HCT116 (cell line): ENCODE measurements at regions of chr6 and their contacts with region 1.

Region 1: GRCh38 chr6:12289933-12290820 is at the start of gene EDN1:
- DNase-seq: peak; percentile 69
- ATAC-seq: peak; percentile 82
- H3K4me3 ChIP-seq: peak within 1 kb of the TSS; percentile 52
- H3K27ac ChIP-seq: peak within 1 kb of the TSS; percentile 4; the same call in 1 of the 2 replicates
- H3K4me1 ChIP-seq: peaks cover 7 to 36% of the 10 kb centered on the region in 2 experiments
- H3K27me3 ChIP-seq: no peaks in the 10 kb centered on the region
- CTCF ChIP-seq: peak; percentile 31 to 49 (median 40); a peak in 4 of 6 replicates
- POLR2A ChIP-seq: no peak
- RAD21 ChIP-seq: peak; percentile 31
- total RNA-seq, gene EDN1: 0.22 TPM

Region 2: DNA sequence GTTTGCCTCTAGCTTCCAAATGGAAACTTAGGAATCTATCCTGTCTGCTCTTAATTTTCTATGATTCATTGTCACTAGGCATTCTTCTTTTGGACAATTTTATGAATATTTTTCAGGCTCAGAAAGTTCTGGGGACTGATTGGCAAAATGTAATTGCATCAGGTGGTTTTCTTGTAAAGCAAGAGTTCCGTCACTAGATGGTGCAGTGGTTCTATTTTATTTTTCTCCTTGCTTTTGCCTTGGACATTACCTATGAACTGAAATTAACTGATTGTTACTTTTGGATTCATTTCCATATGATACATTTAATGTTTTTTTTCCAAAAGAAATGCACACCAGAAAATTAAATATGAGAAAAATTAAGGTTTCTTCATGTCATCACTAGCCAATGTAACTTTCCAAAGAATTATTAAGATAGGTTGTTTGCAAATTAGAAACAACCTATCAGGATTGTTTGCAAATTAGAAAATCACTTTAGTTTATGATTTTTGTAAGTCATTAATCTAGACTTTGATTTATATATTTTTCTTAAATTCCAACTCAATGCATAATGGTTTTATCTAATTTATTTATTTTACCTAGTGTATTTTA is 704.7 kb before region 1 on chr6:
- CTCF ChIA-PET with region 1: interaction called, 9 read pairs
- POLR2A ChIA-PET with region 1: no interaction called
- RAD21 ChIA-PET with region 1: no interaction called
- intact Hi-C with region 1: loop called (anchors 1 kb)
- DNase-seq: peak; percentile 44
- ATAC-seq: peak; percentile 63; the same call in 1 of the 2 replicates
- H3K4me3 ChIP-seq: no peak overlapping the region
- H3K27ac ChIP-seq: no peak overlapping the region
- H3K4me1 ChIP-seq: no peaks in the 10 kb centered on the region
- H3K27me3 ChIP-seq: no peaks in the 10 kb centered on the region
- CTCF ChIP-seq: peak; percentile 48 to 76 (median 71)
- POLR2A ChIP-seq: no peak
- RAD21 ChIP-seq: peak; percentile 75

Region 3: GRCh38 chr6:11653028-11653583 is 637.1 kb before region 1 on chr6:
- CTCF ChIA-PET with region 1: interaction called, 15 read pairs
- POLR2A ChIA-PET with region 1: no interaction called
- RAD21 ChIA-PET with region 1: no interaction called
- intact Hi-C with region 1: loop called (anchors 1 kb)
- DNase-seq: no peak
- ATAC-seq: no peak
- H3K4me3 ChIP-seq: no peak overlapping the region
- H3K27ac ChIP-seq: no peak overlapping the region
- H3K4me1 ChIP-seq: peaks cover 6 to 19% of the 10 kb centered on the region in 2 experiments
- H3K27me3 ChIP-seq: no peaks in the 10 kb centered on the region
- CTCF ChIP-seq: no peak
- POLR2A ChIP-seq: no peak
- RAD21 ChIP-seq: no peak

Region 4: DNA sequence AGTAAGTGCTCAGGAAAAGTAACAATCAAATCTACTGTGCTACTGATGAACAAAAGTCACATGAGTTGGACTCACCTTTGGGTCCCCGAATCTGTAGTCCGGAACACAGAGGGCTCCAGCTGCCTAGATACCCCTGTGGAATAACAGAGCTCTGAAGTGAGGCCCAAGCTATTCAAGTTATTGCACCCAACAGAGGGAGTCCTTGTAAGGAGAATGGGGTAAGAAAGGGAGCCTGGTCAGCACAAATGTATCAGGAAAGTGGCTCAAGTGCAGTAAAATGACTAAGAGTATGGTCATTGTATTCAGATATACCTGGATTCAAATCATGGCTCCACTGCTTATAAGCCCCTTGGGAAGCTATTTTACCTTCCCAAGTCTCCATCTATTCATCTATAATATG is 20.9 kb after region 1 on chr6:
- CTCF ChIA-PET with region 1: interaction called, 10 read pairs
- POLR2A ChIA-PET with region 1: no interaction called
- RAD21 ChIA-PET with region 1: no interaction called
- intact Hi-C with region 1: no loop called
- DNase-seq: no peak
- ATAC-seq: peak; percentile 65
- H3K4me3 ChIP-seq: no peak overlapping the region
- H3K27ac ChIP-seq: no peak overlapping the region
- H3K4me1 ChIP-seq: peaks cover 0 to 26% of the 10 kb centered on the region in 2 experiments; a peak in 2 of 4 replicates
- H3K27me3 ChIP-seq: no peaks in the 10 kb centered on the region
- CTCF ChIP-seq: peak in 2 of 3 experiments; percentile 19 to 43; a peak in 2 of 6 replicates
- POLR2A ChIP-seq: no peak
- RAD21 ChIP-seq: peak; percentile 59

Region 5: DNA sequence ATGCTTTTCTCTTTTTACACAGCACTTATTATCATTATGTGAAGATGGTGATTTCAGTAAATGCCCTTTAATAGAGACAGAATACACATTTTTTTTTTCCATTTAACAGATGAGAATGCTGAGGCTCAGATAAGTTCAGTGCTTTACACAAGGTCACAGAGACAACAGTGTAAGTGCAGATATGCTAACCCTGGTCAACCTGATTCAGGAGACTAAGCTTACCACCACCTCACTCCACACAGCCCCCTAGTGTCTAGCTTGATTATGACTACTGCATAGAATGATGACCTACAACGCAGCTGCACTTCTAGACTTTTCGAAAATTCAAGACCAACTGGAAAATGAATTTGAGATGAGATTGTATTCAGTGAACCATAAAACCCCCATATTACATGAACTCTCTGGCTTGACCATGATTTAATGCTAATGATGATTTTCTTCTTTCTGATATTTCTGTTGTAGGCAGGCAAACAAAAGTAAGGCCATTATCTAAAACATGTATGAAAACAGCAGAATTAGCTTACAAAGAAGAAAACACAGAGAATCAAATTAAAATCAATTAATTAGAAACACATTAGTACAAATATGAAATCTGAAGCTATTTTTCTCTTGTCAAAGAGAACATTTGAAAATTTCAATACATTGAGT is 214.3 kb after region 1 on chr6:
- CTCF ChIA-PET with region 1: interaction called, 7 read pairs
- POLR2A ChIA-PET with region 1: interaction called, 3 read pairs
- RAD21 ChIA-PET with region 1: no interaction called
- intact Hi-C with region 1: loop called (anchors 5 kb)
- DNase-seq: peak; percentile 48
- ATAC-seq: peak; percentile 96
- H3K4me3 ChIP-seq: no peak overlapping the region
- H3K27ac ChIP-seq: no peak overlapping the region
- H3K4me1 ChIP-seq: no peaks in the 10 kb centered on the region
- H3K27me3 ChIP-seq: no peaks in the 10 kb centered on the region
- CTCF ChIP-seq: peak; percentile 39 to 76 (median 65); a peak in 5 of 6 replicates
- POLR2A ChIP-seq: no peak
- RAD21 ChIP-seq: peak; percentile 66